ENCODE measurements at regions of chr14 and their contacts with region 1.

Region 1: GRCh38 chr14:93184388-93185353 is at the starts of genes LYSET and MOAP1:
- DNase-seq: peak; percentile 87 to 96
- ATAC-seq: peak; percentile 80 to 92 (median 89)
- H3K4me3 ChIP-seq: peak within 1 kb of the TSS; percentile 97
- H3K4me3 Mint-ChIP-seq: peak within 1 kb of the TSS; percentile 94
- H3K27ac ChIP-seq: peak within 1 kb of the TSS; percentile 100
- H3K27ac Mint-ChIP-seq: peak within 1 kb of the TSS; percentile 91 to 94
- H3K4me1 ChIP-seq: peaks cover 23% of the 10 kb centered on the region
- H3K4me1 Mint-ChIP-seq: peaks cover 28 to 33% of the 10 kb centered on the region in 2 donors
- H3K27me3 ChIP-seq: no peaks in the 10 kb centered on the region
- H3K27me3 Mint-ChIP-seq: no peaks in the 10 kb centered on the region
- CTCF ChIP-seq: peak; percentile 23
- total RNA-seq, gene LYSET: 6.1 to 13.1 (median 9.0) TPM
- total RNA-seq, gene MOAP1: 89.5 to 106 (median 91.4) TPM

Region 2: DNA sequence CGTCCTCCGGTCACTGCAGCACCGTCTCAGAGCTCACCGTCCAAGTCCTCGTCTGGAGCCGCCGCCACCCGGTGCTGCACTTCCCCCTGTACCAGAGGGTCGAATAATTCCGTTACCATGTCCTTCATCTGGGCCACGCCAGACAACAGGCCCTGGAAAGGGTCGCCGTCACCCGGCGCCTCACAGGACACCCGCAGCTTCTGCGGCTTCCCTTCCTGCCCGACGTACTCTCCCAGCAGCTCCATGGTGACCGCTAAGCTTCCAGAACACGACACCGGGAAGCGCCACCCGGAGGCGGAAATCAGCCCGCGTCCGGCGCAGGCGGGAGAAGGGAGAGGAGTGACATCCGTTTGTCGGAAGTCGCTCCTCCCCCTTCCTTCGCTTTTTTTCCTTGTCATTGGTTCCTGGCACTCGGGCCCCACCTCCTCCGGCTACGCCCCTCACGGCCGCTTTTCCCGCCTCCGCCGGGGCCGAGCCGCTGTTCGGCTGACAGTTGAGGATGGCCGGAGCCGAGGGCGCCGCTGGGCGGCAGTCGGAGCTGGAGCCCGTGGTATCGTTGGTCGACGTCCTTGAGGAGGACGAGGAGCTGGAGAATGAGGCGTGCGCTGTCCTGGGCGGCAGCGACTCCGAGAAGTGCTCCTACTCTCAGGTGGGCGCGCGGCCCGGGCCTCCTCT is 22.3 kb after region 1 on chr14 and contains the starts of genes GON7 and UBR7:
- intact Hi-C with region 1: loop called (anchors 1 kb)
- DNase-seq: peak; percentile 79 to 95
- ATAC-seq: peak; percentile 95 to 98 (median 96)
- H3K4me3 ChIP-seq: peak within 1 kb of the TSS; percentile 86
- H3K4me3 Mint-ChIP-seq: peak within 1 kb of the TSS; percentile 96
- H3K27ac ChIP-seq: peak within 1 kb of the TSS; percentile 69
- H3K27ac Mint-ChIP-seq: peak within 1 kb of the TSS; percentile 92 to 93
- H3K4me1 ChIP-seq: peaks cover 20% of the 10 kb centered on the region
- H3K4me1 Mint-ChIP-seq: peaks cover 27 to 43% of the 10 kb centered on the region in 2 donors
- H3K27me3 ChIP-seq: no peaks in the 10 kb centered on the region
- H3K27me3 Mint-ChIP-seq: no peaks in the 10 kb centered on the region
- CTCF ChIP-seq: peak; percentile 11
- total RNA-seq, gene GON7: 3.2 to 6.6 (median 5.2) TPM
- total RNA-seq, gene UBR7: 17.0 to 23.4 (median 18.6) TPM

Region 3: GRCh38 chr14:93332853-93333630 is 148.4 kb after region 1 on chr14 and contains the start of gene BTBD7:
- intact Hi-C with region 1: loop called (anchors 1 kb)
- DNase-seq: peak; percentile 92 to 98
- ATAC-seq: peak; percentile 90 to 98 (median 95)
- H3K4me3 ChIP-seq: peak within 1 kb of the TSS; percentile 83
- H3K4me3 Mint-ChIP-seq: peak within 1 kb of the TSS; percentile 94
- H3K27ac ChIP-seq: peak within 1 kb of the TSS; percentile 83
- H3K27ac Mint-ChIP-seq: peak within 1 kb of the TSS; percentile 87 to 96
- H3K4me1 ChIP-seq: peaks cover 14% of the 10 kb centered on the region
- H3K4me1 Mint-ChIP-seq: peaks cover 42 to 45% of the 10 kb centered on the region in 2 donors
- H3K27me3 ChIP-seq: no peaks in the 10 kb centered on the region
- H3K27me3 Mint-ChIP-seq: no peaks in the 10 kb centered on the region
- CTCF ChIP-seq: no peak
- total RNA-seq, gene BTBD7: 32.6 to 41.4 (median 38.7) TPM